HCT116 (cell line): ENCODE measurements at regions of chr1 and their contacts with region 1.

Region 1: DNA sequence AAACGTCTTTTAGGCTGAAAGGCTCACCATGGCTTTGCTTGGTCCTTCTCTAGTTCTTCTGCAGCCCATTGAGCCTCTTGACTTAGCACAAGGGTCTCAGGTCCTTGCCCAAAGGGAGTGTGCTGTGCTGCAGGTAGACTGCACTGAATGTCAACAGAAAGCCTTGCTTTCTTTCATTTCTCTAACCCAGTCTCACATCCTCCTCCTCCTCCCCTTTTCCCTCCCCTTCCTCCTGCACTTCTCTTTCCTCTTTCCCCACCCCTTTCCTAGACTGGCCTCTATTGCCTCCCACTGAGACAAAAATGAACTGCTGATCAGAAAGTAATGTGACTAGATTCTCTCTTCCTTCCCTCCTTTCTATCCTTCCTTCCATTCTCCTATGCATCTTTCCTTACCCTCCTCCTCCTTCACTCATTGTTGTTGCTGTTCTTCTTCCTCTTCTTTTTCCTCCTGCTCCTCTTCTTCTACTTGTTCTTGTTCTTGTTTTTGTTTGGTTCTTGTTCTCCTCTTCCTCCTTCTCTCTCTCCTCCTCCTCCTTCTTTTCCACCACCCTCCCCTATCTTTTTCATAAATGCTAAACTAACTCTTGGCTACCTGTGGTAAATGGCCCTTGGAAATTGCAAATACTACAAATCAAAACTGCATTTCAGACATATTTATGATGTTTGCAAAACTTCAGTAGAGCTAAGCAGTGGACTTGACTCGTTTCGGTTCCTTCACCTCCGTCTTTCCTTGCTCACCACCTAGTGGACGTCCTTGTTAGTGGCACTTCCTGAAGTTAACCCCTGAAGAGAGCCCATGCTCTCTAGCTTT is at the start of gene SELL:
- DNase-seq: peak; percentile 73
- ATAC-seq: peak; percentile 96
- H3K4me3 ChIP-seq: peak within 1 kb of the TSS; percentile 29 to 55
- H3K27ac ChIP-seq: peak within 1 kb of the TSS; percentile 13; the same call in 1 of the 2 replicates
- H3K4me1 ChIP-seq: peaks cover 2 to 12% of the 10 kb centered on the region in 2 experiments; a peak in 3 of 4 replicates
- H3K27me3 ChIP-seq: no peaks in the 10 kb centered on the region
- CTCF ChIP-seq: peak; percentile 70 to 84 (median 82); a peak in 5 of 6 replicates
- POLR2A ChIP-seq: no peak
- RAD21 ChIP-seq: peak; percentile 78
- total RNA-seq, gene SELL: 4.1 TPM

Region 2: DNA sequence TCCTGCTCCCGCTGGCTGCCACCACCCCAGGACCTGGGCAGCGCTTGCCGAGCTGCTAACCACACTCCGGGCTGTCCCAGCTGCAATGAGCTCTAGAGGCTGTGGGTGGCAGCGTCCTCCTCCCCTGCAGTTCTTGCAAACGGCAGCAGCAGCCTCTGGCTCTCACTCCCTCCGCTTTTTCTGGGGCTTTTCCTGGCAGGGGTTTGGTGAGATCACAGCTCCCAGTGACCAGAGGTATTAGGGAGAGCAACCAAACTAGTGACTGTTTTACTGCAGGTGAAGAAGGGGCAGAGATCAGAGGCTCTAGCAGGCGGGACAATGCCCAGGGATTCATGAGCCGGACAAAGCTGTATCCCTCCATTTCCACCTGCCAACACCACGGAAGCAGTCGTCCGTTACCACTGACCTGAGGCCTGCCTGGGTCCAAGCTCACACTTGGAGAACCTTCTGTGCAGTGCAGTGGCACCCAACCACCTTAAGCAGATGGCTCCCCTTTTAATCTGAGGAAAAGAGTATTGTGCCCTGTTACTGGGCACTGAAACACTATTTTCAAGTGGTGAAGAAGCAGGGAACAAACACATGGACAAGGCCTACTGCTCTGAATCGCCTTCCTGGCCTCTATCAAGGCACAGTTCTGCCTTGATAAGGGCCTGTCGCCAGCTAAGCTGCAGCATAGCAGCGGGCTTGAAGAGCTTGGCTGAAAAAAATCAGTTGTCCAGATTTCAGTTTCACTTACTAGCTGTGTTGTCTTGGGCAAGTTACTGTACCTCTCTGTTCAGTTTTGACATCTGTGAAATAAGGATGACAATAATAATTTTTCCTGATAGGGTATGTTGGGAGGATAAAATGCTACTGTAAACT is 125.0 kb before region 1 on chr1 and contains the start of gene F5:
- CTCF ChIA-PET with region 1: interaction called, 15 read pairs
- POLR2A ChIA-PET with region 1: no interaction called
- RAD21 ChIA-PET with region 1: interaction called in 1 of 2 experiments, 8 read pairs
- intact Hi-C with region 1: no loop called
- DNase-seq: peak; percentile 58
- ATAC-seq: peak; percentile 100
- H3K4me3 ChIP-seq: peak within 1 kb of the TSS; percentile 28 to 48
- H3K27ac ChIP-seq: no peak within 1 kb of the TSS
- H3K4me1 ChIP-seq: peaks cover 2 to 12% of the 10 kb centered on the region in 2 experiments; a peak in 3 of 4 replicates
- H3K27me3 ChIP-seq: no peaks in the 10 kb centered on the region
- CTCF ChIP-seq: peak; percentile 42 to 73 (median 68); a peak in 5 of 6 replicates
- POLR2A ChIP-seq: no peak
- RAD21 ChIP-seq: peak; percentile 73
- total RNA-seq, gene F5: 0.37 TPM

Region 3: DNA sequence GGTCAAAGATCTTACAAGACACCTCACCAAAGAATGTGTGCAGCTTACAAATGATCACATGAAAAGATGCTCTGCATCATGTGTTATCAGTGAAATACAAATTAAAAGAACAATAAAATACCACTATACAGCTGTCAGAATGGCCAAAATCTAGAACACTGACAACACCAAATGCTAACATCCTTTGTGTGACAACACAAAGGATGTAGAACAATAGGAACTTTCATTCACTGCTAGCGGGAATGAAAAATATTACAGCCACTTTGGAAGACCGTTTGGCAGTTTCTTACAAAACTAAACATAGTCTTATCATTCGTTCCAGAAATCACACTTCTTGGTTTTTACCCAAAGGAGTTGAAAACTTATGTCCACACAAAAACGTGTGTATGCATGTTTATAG is 61.1 kb before region 1 on chr1:
- CTCF ChIA-PET with region 1: no interaction called
- POLR2A ChIA-PET with region 1: no interaction called
- RAD21 ChIA-PET with region 1: no interaction called
- intact Hi-C with region 1: loop called (anchors 10 kb)
- DNase-seq: no peak
- ATAC-seq: no peak
- H3K4me3 ChIP-seq: no peak overlapping the region
- H3K27ac ChIP-seq: no peak overlapping the region
- H3K4me1 ChIP-seq: no peaks in the 10 kb centered on the region
- H3K27me3 ChIP-seq: no peaks in the 10 kb centered on the region
- CTCF ChIP-seq: no peak
- POLR2A ChIP-seq: no peak
- RAD21 ChIP-seq: no peak

Region 4: GRCh38 chr1:169753552-169753951 is 41.9 kb after region 1 on chr1:
- CTCF ChIA-PET with region 1: no interaction called
- POLR2A ChIA-PET with region 1: no interaction called
- RAD21 ChIA-PET with region 1: no interaction called
- intact Hi-C with region 1: loop called (anchors 1 kb)
- DNase-seq: no peak
- ATAC-seq: peak; percentile 40; the same call in 1 of the 2 replicates
- H3K4me3 ChIP-seq: no peak overlapping the region
- H3K27ac ChIP-seq: no peak overlapping the region
- H3K4me1 ChIP-seq: no peaks in the 10 kb centered on the region
- H3K27me3 ChIP-seq: no peaks in the 10 kb centered on the region
- CTCF ChIP-seq: 0 out of 6 replicates have a peak, but pooled peaks of 1 of the 3 experiments have one; percentile 20
- POLR2A ChIP-seq: no peak
- RAD21 ChIP-seq: no peak

Region 5: GRCh38 chr1:170133766-170134495 is 422.3 kb after region 1 on chr1:
- CTCF ChIA-PET with region 1: no interaction called
- POLR2A ChIA-PET with region 1: no interaction called
- RAD21 ChIA-PET with region 1: no interaction called
- intact Hi-C with region 1: no loop called
- DNase-seq: no peak
- ATAC-seq: no peak
- H3K4me3 ChIP-seq: no peak overlapping the region
- H3K27ac ChIP-seq: no peak overlapping the region
- H3K4me1 ChIP-seq: no peaks in the 10 kb centered on the region
- H3K27me3 ChIP-seq: no peaks in the 10 kb centered on the region; the same call in 1 of the 2 replicates
- CTCF ChIP-seq: no peak
- POLR2A ChIP-seq: no peak
- RAD21 ChIP-seq: no peak